PC-3 (cell line): ENCODE measurements at regions of chr4 and their contacts with region 1.

Region 1: GRCh38 chr4:7880683-7881082 is 59.0 kb downstream of the AFAP1 start:
- DNase-seq: no peak
- ATAC-seq: peak; percentile 18
- H3K4me3 ChIP-seq: no peak overlapping the region
- H3K27ac ChIP-seq: peak overlapping the region; percentile 92
- H3K4me1 ChIP-seq: peaks cover 60% of the 10 kb centered on the region
- H3K27me3 ChIP-seq: no peaks in the 10 kb centered on the region
- CTCF ChIP-seq: no peak

Region 2: GRCh38 chr4:7861440-7861881 is 19.2 kb before region 1 on chr4:
- CTCF ChIA-PET with region 1: no interaction called
- POLR2A ChIA-PET with region 1: no interaction called
- intact Hi-C with region 1: loop called (anchors 2 kb)
- DNase-seq: peak; percentile 90
- ATAC-seq: peak; percentile 82
- H3K4me3 ChIP-seq: peak overlapping the region; percentile 45
- H3K27ac ChIP-seq: peak overlapping the region; percentile 78
- H3K4me1 ChIP-seq: peaks cover 58% of the 10 kb centered on the region
- H3K27me3 ChIP-seq: no peaks in the 10 kb centered on the region
- CTCF ChIP-seq: no peak

Region 3: GRCh38 chr4:7910952-7911578 is 30.4 kb after region 1 on chr4:
- CTCF ChIA-PET with region 1: no interaction called
- POLR2A ChIA-PET with region 1: no interaction called
- intact Hi-C with region 1: no loop called
- DNase-seq: no peak
- ATAC-seq: no peak
- H3K4me3 ChIP-seq: no peak overlapping the region
- H3K27ac ChIP-seq: no peak overlapping the region
- H3K4me1 ChIP-seq: peaks cover 45% of the 10 kb centered on the region
- H3K27me3 ChIP-seq: no peaks in the 10 kb centered on the region
- CTCF ChIP-seq: no peak

Region 4: GRCh38 chr4:7987148-7987989 is 106.7 kb after region 1 on chr4:
- CTCF ChIA-PET with region 1: no interaction called
- POLR2A ChIA-PET with region 1: no interaction called
- intact Hi-C with region 1: loop called (anchors 5 kb)
- DNase-seq: peak; percentile 86
- ATAC-seq: peak; percentile 81
- H3K4me3 ChIP-seq: no peak overlapping the region
- H3K27ac ChIP-seq: peak overlapping the region; percentile 66
- H3K4me1 ChIP-seq: peaks cover 15% of the 10 kb centered on the region
- H3K27me3 ChIP-seq: no peaks in the 10 kb centered on the region
- CTCF ChIP-seq: peak; percentile 86